ENCODE measurements at regions of chr1 and their contacts with region 1.

Region 1: GRCh38 chr1:226827968-226828513 is 42.4 kb upstream of the PSEN2 start:
- DNase-seq: peak; percentile 87
- H3K4me3 ChIP-seq: no peak overlapping the region
- H3K27ac ChIP-seq: peak overlapping the region; percentile 90
- H3K4me1 ChIP-seq: peaks cover 6% of the 10 kb centered on the region
- H3K27me3 ChIP-seq: peaks cover 0 to 4% of the 10 kb centered on the region in 2 experiments
- CTCF ChIP-seq: peak; percentile 89 to 95
- POLR2A ChIP-seq: no peak

Region 2: DNA sequence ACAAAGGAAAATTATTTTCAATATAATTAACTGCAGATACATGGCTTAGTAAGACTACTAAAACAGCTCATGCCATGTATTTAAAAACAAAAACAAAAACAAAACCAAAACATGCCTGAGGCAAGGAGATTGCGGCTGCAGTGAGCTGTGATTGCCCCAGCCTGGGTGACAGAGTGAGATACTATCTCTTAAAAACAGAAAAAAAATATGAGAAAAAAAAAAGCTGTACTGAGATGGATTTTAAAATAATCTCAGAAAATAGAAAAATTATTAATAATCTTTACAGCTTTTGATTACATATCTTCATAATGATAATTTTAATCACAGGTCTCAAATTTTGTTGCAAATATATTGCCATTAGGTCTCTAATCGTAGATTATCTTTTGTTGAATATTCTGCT is 495.1 kb before region 1 on chr1:
- CTCF ChIA-PET with region 1: no interaction called
- POLR2A ChIA-PET with region 1: no interaction called
- dilution Hi-C with region 1: no loop called
- intact Hi-C with region 1: no loop called
- DNase-seq: no peak
- H3K4me3 ChIP-seq: no peak overlapping the region
- H3K27ac ChIP-seq: no peak overlapping the region
- H3K4me1 ChIP-seq: no peaks in the 10 kb centered on the region
- H3K27me3 ChIP-seq: no peaks in the 10 kb centered on the region
- CTCF ChIP-seq: no peak
- POLR2A ChIP-seq: no peak

Region 3: GRCh38 chr1:226547754-226548191 is 280.3 kb before region 1 on chr1:
- CTCF ChIA-PET with region 1: interaction called, 6 read pairs
- POLR2A ChIA-PET with region 1: no interaction called
- dilution Hi-C with region 1: no loop called
- intact Hi-C with region 1: loop called (anchors 1 kb)
- DNase-seq: peak; percentile 85
- H3K4me3 ChIP-seq: no peak overlapping the region
- H3K27ac ChIP-seq: no peak overlapping the region
- H3K4me1 ChIP-seq: peaks cover 2% of the 10 kb centered on the region
- H3K27me3 ChIP-seq: peaks cover 46 to 63% of the 10 kb centered on the region in 2 experiments
- CTCF ChIP-seq: peak; percentile 86 to 93
- POLR2A ChIP-seq: no peak

Region 4: GRCh38 chr1:226634166-226634588 is 193.9 kb before region 1 on chr1:
- CTCF ChIA-PET with region 1: interaction called, 85 read pairs
- POLR2A ChIA-PET with region 1: no interaction called
- dilution Hi-C with region 1: no loop called
- intact Hi-C with region 1: loop called (anchors 1 kb)
- DNase-seq: peak; percentile 60
- H3K4me3 ChIP-seq: no peak overlapping the region
- H3K27ac ChIP-seq: no peak overlapping the region
- H3K4me1 ChIP-seq: no peaks in the 10 kb centered on the region
- H3K27me3 ChIP-seq: no peaks in the 10 kb centered on the region
- CTCF ChIP-seq: peak; percentile 83 to 95
- POLR2A ChIP-seq: no peak

Region 5: DNA sequence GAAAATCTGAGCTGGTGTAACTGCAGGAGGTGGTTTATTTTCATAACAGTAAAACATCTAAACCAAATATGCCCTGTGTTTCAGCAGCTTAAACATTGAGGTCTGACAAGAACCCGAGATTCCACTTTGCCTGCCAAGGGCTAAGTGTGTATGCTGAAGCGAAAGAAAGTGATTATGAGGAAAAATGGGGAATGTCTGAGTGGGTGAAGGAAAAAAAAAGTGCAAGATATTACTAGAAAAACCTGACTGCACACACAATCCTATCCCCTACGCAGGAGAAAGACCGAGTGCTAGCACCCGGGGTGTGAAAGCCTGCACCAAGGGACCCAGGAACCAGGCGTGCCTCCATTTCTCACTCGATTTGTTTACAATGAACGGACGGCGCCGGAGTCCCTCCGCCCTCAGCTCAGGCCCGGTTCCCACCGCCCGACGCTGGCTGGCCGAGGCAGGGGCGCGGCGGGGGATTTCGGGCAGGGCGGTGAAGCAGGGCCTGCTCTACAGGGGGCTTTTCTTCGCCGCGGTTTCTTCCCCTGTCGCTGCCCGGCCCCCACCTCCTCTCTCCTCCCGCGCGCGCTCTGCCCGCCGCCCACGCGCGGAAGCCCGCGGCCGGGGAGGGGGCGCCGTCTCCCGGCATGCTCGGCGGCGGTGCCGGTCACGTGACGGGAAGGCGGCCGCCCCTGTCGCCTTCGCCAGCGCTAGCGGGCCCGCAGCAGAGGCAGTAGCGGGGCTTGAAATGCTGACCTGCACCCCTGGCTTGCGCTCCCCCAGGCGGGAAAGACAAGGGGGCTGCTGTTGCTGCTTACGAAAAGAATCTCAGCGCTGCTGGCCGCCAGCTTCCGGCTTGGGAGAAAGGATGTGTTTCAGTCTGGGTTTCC is 124.8 kb before region 1 on chr1:
- CTCF ChIA-PET with region 1: interaction called, 5 read pairs
- POLR2A ChIA-PET with region 1: no interaction called
- dilution Hi-C with region 1: no loop called
- intact Hi-C with region 1: loop called (anchors 2 kb)
- DNase-seq: peak; percentile 73
- H3K4me3 ChIP-seq: peak overlapping the region; percentile 49 to 56 (median 54)
- H3K27ac ChIP-seq: peak overlapping the region; percentile 49
- H3K4me1 ChIP-seq: peaks cover 8% of the 10 kb centered on the region
- H3K27me3 ChIP-seq: no peaks in the 10 kb centered on the region
- CTCF ChIP-seq: no peak
- POLR2A ChIP-seq: peak; percentile 81

Region 6: GRCh38 chr1:226736908-226737818 is 90.9 kb before region 1 on chr1:
- CTCF ChIA-PET with region 1: interaction called, 13 read pairs
- POLR2A ChIA-PET with region 1: no interaction called
- dilution Hi-C with region 1: no loop called
- intact Hi-C with region 1: loop called (anchors 1 kb)
- DNase-seq: peak; percentile 50
- H3K4me3 ChIP-seq: peak overlapping the region; percentile 68 to 89 (median 70)
- H3K27ac ChIP-seq: peak overlapping the region; percentile 90
- H3K4me1 ChIP-seq: peaks cover 21% of the 10 kb centered on the region
- H3K27me3 ChIP-seq: no peaks in the 10 kb centered on the region
- CTCF ChIP-seq: peak in 1 of 2 donors; percentile 21
- POLR2A ChIP-seq: no peak

Region 7: GRCh38 chr1:227197064-227197463 is 369.0 kb after region 1 on chr1:
- CTCF ChIA-PET with region 1: no interaction called
- POLR2A ChIA-PET with region 1: no interaction called
- dilution Hi-C with region 1: no loop called
- intact Hi-C with region 1: no loop called
- DNase-seq: no peak
- H3K4me3 ChIP-seq: no peak overlapping the region
- H3K27ac ChIP-seq: no peak overlapping the region
- H3K4me1 ChIP-seq: no peaks in the 10 kb centered on the region
- H3K27me3 ChIP-seq: no peaks in the 10 kb centered on the region
- CTCF ChIP-seq: no peak
- POLR2A ChIP-seq: no peak

Region 8: GRCh38 chr1:227437495-227438008 is 609.5 kb after region 1 on chr1:
- CTCF ChIA-PET with region 1: interaction called, 3 read pairs
- POLR2A ChIA-PET with region 1: no interaction called
- dilution Hi-C with region 1: no loop called
- intact Hi-C with region 1: loop called (anchors 1 kb)
- DNase-seq: peak; percentile 84
- H3K4me3 ChIP-seq: peak overlapping the region in 2 of 3 experiments; percentile 11 to 52
- H3K27ac ChIP-seq: no peak overlapping the region
- H3K4me1 ChIP-seq: peaks cover 12% of the 10 kb centered on the region
- H3K27me3 ChIP-seq: no peaks in the 10 kb centered on the region
- CTCF ChIP-seq: peak in 1 of 2 donors; percentile 32
- POLR2A ChIP-seq: no peak

Measured in endothelial cell of umbilical vein (primary cell).